Naive thymus-derived CD4-positive, alpha-beta T cell (primary cell): ENCODE measurements at regions of chr12 and their contacts with region 1.

Region 1: GRCh38 chr12:64890873-64891468 is 66.5 kb downstream of the TBC1D30 start:
- DNase-seq: peak in 7 of 9 donors; percentile 16 to 61 (median 51)
- ATAC-seq: peak; percentile 60
- H3K4me3 ChIP-seq: no peak overlapping the region
- H3K4me3 Mint-ChIP-seq: no peak overlapping the region
- H3K27ac ChIP-seq: no peak overlapping the region
- H3K27ac Mint-ChIP-seq: no peak overlapping the region
- H3K4me1 ChIP-seq: no peaks in the 10 kb centered on the region
- H3K4me1 Mint-ChIP-seq: peaks cover 0 to 2% (median 0%) of the 10 kb centered on the region in 7 donors
- H3K27me3 ChIP-seq: no peaks in the 10 kb centered on the region
- H3K27me3 Mint-ChIP-seq: peaks cover 8 to 17% (median 15%) of the 10 kb centered on the region in 5 donors

Region 2: DNA sequence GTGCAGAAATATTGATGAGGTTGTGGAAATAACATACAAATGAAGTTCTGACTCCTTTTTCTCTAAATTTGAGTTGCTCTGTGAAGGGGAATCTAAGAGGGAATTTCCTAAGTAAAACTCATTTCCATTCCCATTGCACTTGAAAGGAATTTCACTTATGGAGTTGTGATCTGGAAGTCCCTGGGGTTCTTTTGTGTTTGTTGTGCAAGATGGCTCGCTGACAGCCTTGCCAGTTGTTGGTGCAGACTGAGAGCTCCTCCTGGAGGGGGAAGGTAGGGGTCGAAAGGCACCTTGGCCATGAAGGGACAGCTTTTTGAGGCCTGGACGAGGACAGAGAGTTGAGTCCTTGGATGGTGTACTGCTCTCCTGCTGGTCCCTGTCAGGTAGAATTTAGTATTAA is 572.4 kb before region 1 on chr12:
- CTCF ChIA-PET with region 1: no interaction called
- POLR2A ChIA-PET with region 1: no interaction called
- intact Hi-C with region 1: no loop called
- DNase-seq: no peak
- ATAC-seq: no peak
- H3K4me3 ChIP-seq: no peak overlapping the region
- H3K4me3 Mint-ChIP-seq: no peak overlapping the region
- H3K27ac ChIP-seq: no peak overlapping the region
- H3K27ac Mint-ChIP-seq: peak overlapping the region in 1 of 9 donors; percentile 33
- H3K4me1 ChIP-seq: no peaks in the 10 kb centered on the region
- H3K4me1 Mint-ChIP-seq: no peaks in the 10 kb centered on the region
- H3K27me3 ChIP-seq: no peaks in the 10 kb centered on the region
- H3K27me3 Mint-ChIP-seq: peaks cover 0 to 3% (median 0%) of the 10 kb centered on the region in 5 donors

Region 3: GRCh38 chr12:65121049-65121955 is 230.3 kb after region 1 on chr12 and contains the start of gene WIF1:
- CTCF ChIA-PET with region 1: no interaction called
- POLR2A ChIA-PET with region 1: no interaction called
- intact Hi-C with region 1: loop called in 1 of 2 experiments (anchors 1 kb)
- DNase-seq: peak in 5 of 9 donors; percentile 6 to 34 (median 10)
- ATAC-seq: peak; percentile 66
- H3K4me3 ChIP-seq: peak within 1 kb of the TSS; percentile 22
- H3K4me3 Mint-ChIP-seq: peak within 1 kb of the TSS; percentile 42 to 77 (median 62)
- H3K27ac ChIP-seq: no peak within 1 kb of the TSS
- H3K27ac Mint-ChIP-seq: peak within 1 kb of the TSS in 1 of 9 donors; percentile 62
- H3K4me1 ChIP-seq: no peaks in the 10 kb centered on the region
- H3K4me1 Mint-ChIP-seq: peaks cover 0 to 12% (median 8%) of the 10 kb centered on the region in 7 donors
- H3K27me3 ChIP-seq: peaks cover 0 to 6% of the 10 kb centered on the region in 2 donors
- H3K27me3 Mint-ChIP-seq: peaks cover 41 to 59% (median 52%) of the 10 kb centered on the region in 5 donors
- total RNA-seq, gene WIF1: not detected

Region 4: DNA sequence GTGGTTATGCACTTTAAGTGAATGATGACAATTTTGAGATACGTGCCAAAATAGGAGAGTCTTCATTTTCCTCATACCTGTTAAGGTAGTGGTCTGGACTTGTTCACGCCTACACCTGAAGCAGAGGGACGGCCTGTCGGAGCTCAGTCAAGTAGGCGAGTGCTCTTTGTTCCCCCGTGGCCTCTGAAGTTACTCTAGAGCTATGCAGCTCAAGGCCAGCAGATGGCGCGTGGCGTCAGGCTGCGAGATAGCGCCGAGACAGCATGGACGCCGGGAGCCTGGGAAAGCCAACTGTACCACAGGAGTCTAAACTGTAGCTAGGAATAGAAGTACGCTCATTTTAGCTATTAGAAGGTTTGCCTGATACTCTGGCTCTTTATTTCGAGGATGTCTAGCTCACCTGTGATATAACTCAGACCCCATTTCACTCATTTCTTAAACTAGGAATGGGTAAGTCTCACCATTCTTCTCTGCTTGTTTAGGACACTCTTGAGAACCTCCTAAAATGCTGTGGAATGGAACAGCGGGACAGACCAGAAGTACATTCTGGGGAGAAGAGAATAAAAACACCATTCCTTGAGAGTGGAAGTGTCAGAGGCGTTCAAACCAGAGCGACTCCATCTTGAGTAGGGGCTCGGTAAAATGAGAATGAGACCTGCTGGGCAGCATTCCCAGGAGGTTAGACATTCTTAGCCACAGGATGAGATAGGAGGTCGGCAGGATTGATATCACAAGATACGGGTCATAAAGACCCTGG is 665.9 kb after region 1 on chr12:
- CTCF ChIA-PET with region 1: no interaction called
- POLR2A ChIA-PET with region 1: no interaction called
- intact Hi-C with region 1: loop called in 1 of 2 experiments (anchors 1 kb)
- DNase-seq: peak; percentile 4 to 59 (median 47)
- ATAC-seq: peak; percentile 86
- H3K4me3 ChIP-seq: no peak overlapping the region
- H3K4me3 Mint-ChIP-seq: no peak overlapping the region
- H3K27ac ChIP-seq: no peak overlapping the region
- H3K27ac Mint-ChIP-seq: no peak overlapping the region
- H3K4me1 ChIP-seq: no peaks in the 10 kb centered on the region
- H3K4me1 Mint-ChIP-seq: peaks cover 0 to 8% (median 6%) of the 10 kb centered on the region in 7 donors
- H3K27me3 ChIP-seq: peaks cover 5% of the 10 kb centered on the region in 2 donors
- H3K27me3 Mint-ChIP-seq: peaks cover 0 to 22% (median 19%) of the 10 kb centered on the region in 5 donors

Region 5: DNA sequence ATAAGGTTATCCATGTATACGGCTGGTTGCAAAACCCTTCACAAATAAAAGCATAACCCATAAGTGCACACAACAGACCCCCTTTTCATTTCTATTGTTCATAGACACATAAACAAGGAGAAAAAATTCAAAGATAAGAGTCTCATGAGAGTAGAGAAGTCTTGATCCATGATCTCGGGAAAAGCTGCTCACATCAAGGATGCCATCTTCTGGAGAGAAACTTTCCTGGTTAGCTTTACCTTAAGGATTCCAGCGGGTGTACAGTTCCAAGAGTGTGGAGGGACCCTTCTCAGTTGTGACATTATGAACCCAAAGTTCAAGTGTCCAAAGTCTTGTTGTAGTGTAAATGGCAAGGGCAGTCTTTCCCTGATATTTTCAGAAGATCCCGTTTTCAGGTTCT is 1095.1 kb after region 1 on chr12:
- CTCF ChIA-PET with region 1: interaction called, 3 read pairs
- POLR2A ChIA-PET with region 1: no interaction called
- intact Hi-C with region 1: loop called in 1 of 2 experiments (anchors 1 kb)
- DNase-seq: no peak
- ATAC-seq: no peak
- H3K4me3 ChIP-seq: no peak overlapping the region
- H3K4me3 Mint-ChIP-seq: no peak overlapping the region
- H3K27ac ChIP-seq: no peak overlapping the region
- H3K27ac Mint-ChIP-seq: no peak overlapping the region
- H3K4me1 ChIP-seq: no peaks in the 10 kb centered on the region
- H3K4me1 Mint-ChIP-seq: no peaks in the 10 kb centered on the region
- H3K27me3 ChIP-seq: no peaks in the 10 kb centered on the region
- H3K27me3 Mint-ChIP-seq: peaks cover 0 to 14% (median 0%) of the 10 kb centered on the region in 5 donors

Region 6: GRCh38 chr12:66087365-66087943 is 1196.5 kb after region 1 on chr12:
- CTCF ChIA-PET with region 1: interaction called, 6 read pairs
- POLR2A ChIA-PET with region 1: no interaction called
- intact Hi-C with region 1: loop called (anchors 1 to 2 kb)
- DNase-seq: peak in 7 of 9 donors; percentile 9 to 42 (median 29)
- ATAC-seq: peak; percentile 72
- H3K4me3 ChIP-seq: no peak overlapping the region
- H3K4me3 Mint-ChIP-seq: no peak overlapping the region
- H3K27ac ChIP-seq: no peak overlapping the region
- H3K27ac Mint-ChIP-seq: no peak overlapping the region
- H3K4me1 ChIP-seq: no peaks in the 10 kb centered on the region
- H3K4me1 Mint-ChIP-seq: no peaks in the 10 kb centered on the region
- H3K27me3 ChIP-seq: peaks cover 0 to 5% of the 10 kb centered on the region in 2 donors
- H3K27me3 Mint-ChIP-seq: peaks cover 13 to 30% (median 27%) of the 10 kb centered on the region in 5 donors

Region 7: GRCh38 chr12:66107451-66107915 is 1216.5 kb after region 1 on chr12:
- CTCF ChIA-PET with region 1: interaction called, 6 read pairs
- POLR2A ChIA-PET with region 1: no interaction called
- intact Hi-C with region 1: loop called in 1 of 2 experiments (anchors 1 kb)
- DNase-seq: peak in 8 of 9 donors; percentile 37 to 78 (median 67)
- ATAC-seq: peak; percentile 93
- H3K4me3 ChIP-seq: no peak overlapping the region
- H3K4me3 Mint-ChIP-seq: no peak overlapping the region
- H3K27ac ChIP-seq: no peak overlapping the region
- H3K27ac Mint-ChIP-seq: no peak overlapping the region
- H3K4me1 ChIP-seq: no peaks in the 10 kb centered on the region
- H3K4me1 Mint-ChIP-seq: peaks cover 2 to 12% (median 4%) of the 10 kb centered on the region in 7 donors
- H3K27me3 ChIP-seq: no peaks in the 10 kb centered on the region
- H3K27me3 Mint-ChIP-seq: peaks cover 6 to 23% (median 20%) of the 10 kb centered on the region in 5 donors

Region 8: DNA sequence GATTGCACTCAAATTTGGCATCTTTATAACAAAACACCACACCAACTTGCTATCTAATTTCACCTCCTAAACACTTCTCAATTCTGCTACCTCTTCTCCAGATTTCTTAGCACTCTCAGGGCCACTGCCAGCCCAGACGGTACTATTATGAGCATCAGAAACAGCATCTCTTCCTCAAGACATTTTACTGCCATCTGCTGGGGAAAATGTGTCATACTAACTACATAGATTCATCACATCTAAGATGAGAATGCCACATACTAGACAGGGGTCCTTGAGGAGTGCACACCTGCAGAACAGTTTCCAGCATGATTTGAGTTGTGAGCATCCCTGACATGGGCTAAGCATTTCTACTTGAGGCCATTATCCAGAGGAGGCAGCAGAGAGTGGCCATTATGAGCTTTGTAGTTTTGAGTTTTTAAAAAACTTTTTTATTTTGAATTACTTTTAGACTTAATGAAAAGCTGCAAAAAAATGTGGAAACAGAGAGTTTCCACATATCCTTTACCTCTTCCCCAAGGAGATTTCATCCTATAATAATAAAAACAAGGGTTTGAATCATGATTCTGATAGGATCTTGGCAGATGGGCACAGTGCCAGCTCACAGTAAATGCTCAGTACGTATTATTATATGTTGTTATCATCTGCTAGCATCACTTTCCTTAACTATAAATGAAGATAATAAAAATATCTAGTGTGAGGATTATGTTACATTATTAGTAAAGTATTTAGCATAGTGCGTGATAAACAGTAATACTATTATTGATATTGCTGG is 1803.1 kb after region 1 on chr12:
- CTCF ChIA-PET with region 1: no interaction called
- POLR2A ChIA-PET with region 1: no interaction called
- intact Hi-C with region 1: loop called in 1 of 2 experiments (anchors 1 kb)
- DNase-seq: peak in 7 of 9 donors; percentile 25 to 57 (median 50)
- ATAC-seq: peak; percentile 89
- H3K4me3 ChIP-seq: no peak overlapping the region
- H3K4me3 Mint-ChIP-seq: no peak overlapping the region
- H3K27ac ChIP-seq: no peak overlapping the region
- H3K27ac Mint-ChIP-seq: no peak overlapping the region
- H3K4me1 ChIP-seq: no peaks in the 10 kb centered on the region
- H3K4me1 Mint-ChIP-seq: peaks cover 3 to 24% (median 18%) of the 10 kb centered on the region in 7 donors
- H3K27me3 ChIP-seq: no peaks in the 10 kb centered on the region
- H3K27me3 Mint-ChIP-seq: peaks cover 0 to 8% (median 0%) of the 10 kb centered on the region in 5 donors